GM10248 (cell line): ENCODE measurements at regions of chr1 and their contacts with region 1.

Region 1: GRCh38 chr1:226407497-226408284 is at the start of gene PARP1:
- DNase-seq: peak; percentile 97
- CTCF ChIP-seq: peak; percentile 72

Region 2: GRCh38 chr1:225809842-225810578 is 597.7 kb before region 1 on chr1 and contains the start of gene EPHX1:
- CTCF ChIA-PET with region 1: no interaction called
- POLR2A ChIA-PET with region 1: no interaction called
- DNase-seq: peak; percentile 92
- CTCF ChIP-seq: peak; percentile 39

Region 3: GRCh38 chr1:226255380-226255779 is 152.3 kb before region 1 on chr1:
- CTCF ChIA-PET with region 1: no interaction called
- POLR2A ChIA-PET with region 1: no interaction called
- DNase-seq: no peak
- CTCF ChIP-seq: no peak

Region 4: GRCh38 chr1:226342656-226343055 is 65.0 kb before region 1 on chr1:
- CTCF ChIA-PET with region 1: no interaction called
- POLR2A ChIA-PET with region 1: no interaction called
- DNase-seq: no peak
- CTCF ChIP-seq: no peak

Region 5: GRCh38 chr1:226382861-226383260 is 24.8 kb before region 1 on chr1:
- CTCF ChIA-PET with region 1: interaction called, 43 read pairs
- POLR2A ChIA-PET with region 1: no interaction called
- DNase-seq: no peak
- CTCF ChIP-seq: no peak

Region 6: GRCh38 chr1:226397011-226397926 is 10.4 kb before region 1 on chr1:
- CTCF ChIA-PET with region 1: interaction called, 74 read pairs
- POLR2A ChIA-PET with region 1: no interaction called
- DNase-seq: no peak
- CTCF ChIP-seq: no peak

Region 7: GRCh38 chr1:226424228-226425003 is 16.7 kb after region 1 on chr1:
- CTCF ChIA-PET with region 1: interaction called, 33 read pairs
- POLR2A ChIA-PET with region 1: no interaction called
- DNase-seq: peak; percentile 49
- CTCF ChIP-seq: peak; percentile 44